HEK293T (cell line): ENCODE measurements at regions of chr2 and their contacts with region 1.

Region 1: DNA sequence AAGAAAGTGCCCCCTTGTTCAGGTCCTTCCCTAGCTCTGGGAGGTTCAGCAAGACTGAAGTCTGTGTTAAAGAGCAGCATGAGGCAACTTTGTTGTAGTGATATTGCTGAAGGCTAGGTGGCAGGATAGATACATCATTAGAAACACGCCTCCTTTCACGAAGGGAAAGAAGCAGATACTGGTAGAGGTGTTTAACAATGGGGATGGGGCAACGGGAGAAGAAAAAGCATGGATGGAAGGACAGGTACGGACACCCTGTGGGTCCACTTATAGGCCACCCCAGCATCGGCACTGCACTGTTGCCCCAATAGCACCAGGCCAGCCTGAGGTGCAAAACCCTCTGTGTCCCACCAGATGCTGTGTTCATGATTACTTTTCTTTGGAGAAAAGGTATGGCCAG is 3.5 kb upstream of the IGFBP5 start:
- DNase-seq: peak; percentile 55

Region 2: DNA sequence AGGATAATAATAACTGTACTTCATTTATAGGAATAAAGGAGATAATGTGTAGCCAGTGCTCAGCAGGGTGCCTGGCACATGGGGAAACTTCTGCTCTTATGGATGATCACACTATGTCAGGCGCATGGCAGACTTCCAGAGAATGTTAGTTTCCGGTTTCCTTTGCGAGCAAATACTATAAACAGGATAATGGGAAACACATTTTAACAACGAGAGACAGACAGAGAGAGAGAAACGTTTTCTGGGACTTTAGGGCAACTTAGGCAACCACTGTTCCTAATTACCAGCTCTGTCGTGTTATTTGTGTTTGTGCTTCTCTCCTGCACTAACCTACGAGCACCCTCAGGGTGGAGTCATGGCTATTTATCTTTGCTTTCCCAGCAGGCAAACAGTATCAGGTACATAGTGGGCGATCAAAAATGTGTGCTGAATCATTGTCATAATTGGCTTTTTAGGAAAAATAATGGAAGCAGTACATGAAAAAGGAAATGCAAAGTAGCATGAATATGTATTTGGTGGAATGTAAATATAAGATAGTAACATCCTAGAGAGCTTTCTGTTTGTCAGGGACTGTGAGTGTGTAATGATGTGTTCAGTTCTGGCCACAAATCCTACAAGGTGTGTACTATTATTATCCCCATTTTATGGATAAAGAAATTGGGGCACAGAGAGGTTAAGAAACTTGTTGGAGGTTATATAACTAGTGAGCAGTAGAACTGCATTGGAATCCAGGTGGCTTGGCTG is 102.5 kb before region 1 on chr2:
- CTCF ChIA-PET with region 1: no interaction called
- POLR2A ChIA-PET with region 1: no interaction called
- DNase-seq: no peak

Region 3: GRCh38 chr2:216775043-216775453 is 76.2 kb after region 1 on chr2:
- CTCF ChIA-PET with region 1: interaction called, 16 read pairs
- POLR2A ChIA-PET with region 1: no interaction called
- DNase-seq: no peak

Region 4: GRCh38 chr2:217510771-217511291 is 811.9 kb after region 1 on chr2:
- CTCF ChIA-PET with region 1: interaction called, 12 read pairs
- POLR2A ChIA-PET with region 1: no interaction called
- DNase-seq: peak; percentile 77

Region 5: GRCh38 chr2:217756375-217757107 is 1057.6 kb after region 1 on chr2:
- CTCF ChIA-PET with region 1: interaction called, 10 read pairs
- POLR2A ChIA-PET with region 1: no interaction called
- DNase-seq: peak; percentile 89